ENCODE measurements at regions of chr7 and their contacts with region 1.

Region 1: GRCh38 chr7:129224251-129225205 is at the start of gene AHCYL2:
- DNase-seq: peak; percentile 88 to 98 (median 95)
- ATAC-seq: peak; percentile 96
- H3K4me3 ChIP-seq: peak within 1 kb of the TSS; percentile 96
- H3K4me3 Mint-ChIP-seq: peak within 1 kb of the TSS; percentile 88 to 99 (median 96)
- H3K27ac ChIP-seq: peak within 1 kb of the TSS; percentile 85
- H3K27ac Mint-ChIP-seq: peak within 1 kb of the TSS; percentile 87 to 98 (median 95)
- H3K4me1 ChIP-seq: peaks cover 13 to 16% of the 10 kb centered on the region in 2 donors
- H3K4me1 Mint-ChIP-seq: peaks cover 27 to 63% (median 48%) of the 10 kb centered on the region in 7 donors
- H3K27me3 ChIP-seq: no peaks in the 10 kb centered on the region
- H3K27me3 Mint-ChIP-seq: no peaks in the 10 kb centered on the region
- total RNA-seq, gene AHCYL2: 14.4 to 22.2 (median 20.4) TPM

Region 2: DNA sequence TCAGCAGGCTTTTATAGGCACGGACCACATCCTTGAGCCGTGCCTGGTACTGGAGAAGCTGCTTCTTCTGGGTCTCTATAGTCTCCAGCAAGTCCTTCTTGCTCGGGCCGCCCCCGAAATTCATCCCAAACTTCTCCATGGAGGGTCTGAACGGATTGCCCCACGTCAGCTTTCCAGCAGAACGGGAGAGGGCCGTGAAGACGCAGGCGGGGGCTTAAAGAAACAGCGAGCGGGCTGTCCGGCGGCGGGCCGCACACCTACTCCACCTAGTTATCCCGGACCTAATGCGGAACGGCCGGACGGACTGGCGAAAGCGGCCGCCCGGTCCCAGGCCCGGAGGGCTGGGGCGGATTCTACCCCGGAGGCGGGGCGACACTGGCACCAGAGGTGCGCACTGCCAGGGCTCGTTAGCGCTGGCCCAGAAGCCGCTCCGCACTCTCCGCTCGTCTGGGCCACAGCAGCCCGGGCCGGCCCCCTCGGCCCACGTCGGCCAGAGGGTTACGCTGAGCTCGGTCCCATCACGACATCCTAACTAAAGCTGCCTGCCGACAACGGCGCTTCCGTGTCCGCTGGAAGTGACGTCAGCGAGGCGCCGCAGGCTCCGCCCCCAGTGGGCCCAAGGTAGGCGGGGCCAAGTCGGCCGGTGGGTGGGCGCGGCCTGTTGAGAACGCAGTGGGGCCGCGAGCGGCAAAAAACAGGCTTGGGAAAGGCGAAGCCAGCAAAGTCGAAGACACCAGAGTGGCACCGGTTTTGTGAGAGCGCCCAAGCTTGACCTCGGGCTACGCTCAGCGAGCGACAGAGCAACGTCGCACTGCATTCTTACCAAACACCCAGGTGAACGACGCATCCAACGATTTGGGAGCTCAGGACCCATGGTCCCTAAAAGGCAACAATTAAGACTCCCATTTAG is 1639.2 kb before region 1 on chr7 and contains the start of gene GCC1:
- CTCF ChIA-PET with region 1: no interaction called
- POLR2A ChIA-PET with region 1: no interaction called
- intact Hi-C with region 1: loop called in 1 of 2 experiments (anchors 5 kb)
- DNase-seq: peak; percentile 87 to 98 (median 93)
- ATAC-seq: peak; percentile 87
- H3K4me3 ChIP-seq: peak within 1 kb of the TSS; percentile 87
- H3K4me3 Mint-ChIP-seq: peak within 1 kb of the TSS; percentile 86 to 98 (median 92)
- H3K27ac ChIP-seq: peak within 1 kb of the TSS; percentile 88
- H3K27ac Mint-ChIP-seq: peak within 1 kb of the TSS; percentile 77 to 97 (median 94)
- H3K4me1 ChIP-seq: peaks cover 47 to 55% of the 10 kb centered on the region in 2 donors
- H3K4me1 Mint-ChIP-seq: peaks cover 55 to 88% (median 78%) of the 10 kb centered on the region in 7 donors
- H3K27me3 ChIP-seq: no peaks in the 10 kb centered on the region
- H3K27me3 Mint-ChIP-seq: no peaks in the 10 kb centered on the region
- total RNA-seq, gene GCC1: 19.6 to 31.3 (median 23.7) TPM

Region 3: GRCh38 chr7:128455551-128456254 is 768.8 kb before region 1 on chr7 and contains the start of gene HILPDA:
- CTCF ChIA-PET with region 1: no interaction called
- POLR2A ChIA-PET with region 1: no interaction called
- intact Hi-C with region 1: loop called in 1 of 2 experiments (anchors 1 kb)
- DNase-seq: peak; percentile 90 to 98 (median 93)
- ATAC-seq: peak; percentile 95
- H3K4me3 ChIP-seq: peak within 1 kb of the TSS; percentile 85
- H3K4me3 Mint-ChIP-seq: peak within 1 kb of the TSS; percentile 81 to 96 (median 92)
- H3K27ac ChIP-seq: peak within 1 kb of the TSS; percentile 83
- H3K27ac Mint-ChIP-seq: peak within 1 kb of the TSS; percentile 72 to 98 (median 89)
- H3K4me1 ChIP-seq: peaks cover 12 to 22% of the 10 kb centered on the region in 2 donors
- H3K4me1 Mint-ChIP-seq: peaks cover 13 to 65% (median 22%) of the 10 kb centered on the region in 7 donors
- H3K27me3 ChIP-seq: no peaks in the 10 kb centered on the region
- H3K27me3 Mint-ChIP-seq: peaks cover 0 to 8% (median 0%) of the 10 kb centered on the region in 5 donors
- total RNA-seq, gene HILPDA: 2.4 to 39.5 (median 4.4) TPM

Region 4: GRCh38 chr7:129144095-129144833 is 80.3 kb before region 1 on chr7 and contains the start of gene TSPAN33:
- CTCF ChIA-PET with region 1: no interaction called
- POLR2A ChIA-PET with region 1: no interaction called
- intact Hi-C with region 1: loop called in 1 of 2 experiments (anchors 1 kb)
- DNase-seq: peak; percentile 43 to 79 (median 53)
- ATAC-seq: peak; percentile 93
- H3K4me3 ChIP-seq: peak within 1 kb of the TSS; percentile 93
- H3K4me3 Mint-ChIP-seq: peak within 1 kb of the TSS; percentile 90 to 97 (median 94)
- H3K27ac ChIP-seq: peak within 1 kb of the TSS; percentile 58
- H3K27ac Mint-ChIP-seq: peak within 1 kb of the TSS in 8 of 9 donors; percentile 7 to 84 (median 73)
- H3K4me1 ChIP-seq: peaks cover 4 to 10% of the 10 kb centered on the region in 2 donors
- H3K4me1 Mint-ChIP-seq: peaks cover 12 to 36% (median 28%) of the 10 kb centered on the region in 7 donors
- H3K27me3 ChIP-seq: peaks cover 0 to 5% of the 10 kb centered on the region in 2 donors
- H3K27me3 Mint-ChIP-seq: peaks cover 0 to 66% (median 5%) of the 10 kb centered on the region in 5 donors
- total RNA-seq, gene TSPAN33: 1.8 to 14.8 (median 3.6) TPM

Region 5: DNA sequence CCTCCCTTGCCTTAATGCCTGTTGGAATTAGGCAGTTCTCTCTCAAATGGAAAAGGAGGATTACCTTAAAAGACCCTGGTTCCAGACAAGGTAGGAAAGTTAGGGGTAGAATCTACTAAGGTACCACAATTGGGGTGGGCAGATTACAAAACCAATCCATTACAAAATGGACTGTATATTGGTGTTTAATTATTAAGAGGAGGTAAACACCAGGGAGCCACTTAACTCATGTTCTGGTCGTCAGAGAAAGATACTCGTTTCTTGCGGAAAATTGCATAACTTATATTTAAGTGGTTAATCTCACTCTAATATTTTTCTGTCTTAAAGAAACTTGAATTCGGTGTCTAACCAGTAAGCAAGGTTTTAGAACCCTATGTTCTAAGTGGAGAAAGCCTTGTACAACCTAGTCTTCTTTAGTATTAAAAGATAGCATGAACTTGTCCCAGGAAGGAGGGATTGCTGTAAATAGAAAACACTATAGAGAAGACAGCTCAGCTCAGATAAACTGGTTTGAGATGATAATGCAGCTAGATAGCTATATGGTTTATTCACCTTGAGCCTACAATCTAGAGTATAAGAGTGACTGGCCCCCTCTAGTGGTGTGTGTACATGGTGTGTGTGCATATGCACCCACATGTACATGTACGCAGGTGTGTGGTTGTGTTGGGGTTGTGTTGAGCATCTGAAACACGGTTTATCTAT is 151.7 kb after region 1 on chr7:
- CTCF ChIA-PET with region 1: interaction called, 11 read pairs
- POLR2A ChIA-PET with region 1: no interaction called
- intact Hi-C with region 1: loop called in 1 of 2 experiments (anchors 10 kb)
- DNase-seq: peak in 8 of 9 donors; percentile 8 to 39 (median 26)
- ATAC-seq: peak; percentile 73
- H3K4me3 ChIP-seq: no peak overlapping the region
- H3K4me3 Mint-ChIP-seq: no peak overlapping the region
- H3K27ac ChIP-seq: no peak overlapping the region
- H3K27ac Mint-ChIP-seq: peak overlapping the region in 1 of 9 donors; percentile 57
- H3K4me1 ChIP-seq: peaks cover 0 to 3% of the 10 kb centered on the region in 2 donors
- H3K4me1 Mint-ChIP-seq: peaks cover 0 to 39% (median 0%) of the 10 kb centered on the region in 7 donors
- H3K27me3 ChIP-seq: no peaks in the 10 kb centered on the region
- H3K27me3 Mint-ChIP-seq: no peaks in the 10 kb centered on the region

Region 6: GRCh38 chr7:129635300-129636029 is 410.9 kb after region 1 on chr7:
- CTCF ChIA-PET with region 1: no interaction called
- POLR2A ChIA-PET with region 1: interaction called, 3 read pairs
- intact Hi-C with region 1: loop called in 1 of 2 experiments (anchors 5 kb)
- DNase-seq: peak; percentile 20 to 73 (median 64)
- ATAC-seq: peak; percentile 97
- H3K4me3 ChIP-seq: no peak overlapping the region
- H3K4me3 Mint-ChIP-seq: peak overlapping the region in 1 of 10 donors; percentile 29
- H3K27ac ChIP-seq: peak overlapping the region; percentile 18
- H3K27ac Mint-ChIP-seq: peak overlapping the region in 8 of 9 donors; percentile 2 to 85 (median 42)
- H3K4me1 ChIP-seq: peaks cover 0 to 3% of the 10 kb centered on the region in 2 donors
- H3K4me1 Mint-ChIP-seq: peaks cover 16 to 73% (median 51%) of the 10 kb centered on the region in 7 donors
- H3K27me3 ChIP-seq: no peaks in the 10 kb centered on the region
- H3K27me3 Mint-ChIP-seq: no peaks in the 10 kb centered on the region

Region 7: DNA sequence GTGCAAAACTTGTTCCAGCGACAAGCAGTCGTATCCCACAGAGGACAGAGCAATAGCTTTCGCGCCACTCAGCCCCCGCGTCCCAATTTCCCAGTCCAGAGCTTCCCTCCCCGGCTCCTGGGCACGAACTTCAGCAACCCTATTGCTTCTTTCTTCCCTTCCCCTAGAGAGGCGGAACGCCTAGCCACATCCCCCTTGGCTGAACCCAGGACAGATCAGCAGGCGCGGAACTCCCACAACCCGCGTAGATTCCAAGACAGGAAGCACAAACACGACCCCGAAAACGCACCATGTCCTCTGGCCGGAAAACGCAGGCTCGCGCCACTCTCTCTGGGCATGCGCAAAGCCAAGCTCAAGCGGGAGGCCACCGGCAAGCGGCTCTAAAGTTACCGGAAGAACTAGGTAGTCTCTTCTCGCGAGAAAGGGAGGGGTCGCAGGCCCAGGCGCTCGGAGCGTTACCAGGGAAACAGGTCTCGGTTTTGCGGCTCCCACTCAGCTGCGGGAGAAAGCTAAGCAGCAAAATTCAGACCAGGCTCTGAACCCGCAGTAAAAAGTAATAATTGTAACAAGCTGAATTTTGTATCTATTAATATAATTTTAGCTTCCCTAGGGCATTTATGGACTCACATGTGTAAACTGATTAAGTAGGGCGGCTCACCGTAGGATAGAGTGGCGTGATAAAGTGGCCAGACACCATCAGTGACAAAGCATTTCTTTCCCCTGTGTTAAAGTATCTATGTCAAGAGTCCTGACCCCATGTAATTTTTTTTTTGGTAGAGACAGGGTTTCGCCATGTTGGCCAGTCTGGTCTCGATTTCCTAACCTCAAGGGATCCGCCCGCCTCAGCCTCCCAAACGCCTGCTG is 980.8 kb after region 1 on chr7 and contains the start of gene TMEM209:
- CTCF ChIA-PET with region 1: no interaction called
- POLR2A ChIA-PET with region 1: no interaction called
- intact Hi-C with region 1: loop called in 1 of 2 experiments (anchors 10 kb)
- DNase-seq: peak; percentile 80 to 96 (median 93)
- ATAC-seq: peak; percentile 98
- H3K4me3 ChIP-seq: peak within 1 kb of the TSS; percentile 89
- H3K4me3 Mint-ChIP-seq: peak within 1 kb of the TSS; percentile 98 to 100 (median 100)
- H3K27ac ChIP-seq: peak within 1 kb of the TSS; percentile 83
- H3K27ac Mint-ChIP-seq: peak within 1 kb of the TSS; percentile 97 to 100 (median 99)
- H3K4me1 ChIP-seq: peaks cover 11 to 14% of the 10 kb centered on the region in 2 donors
- H3K4me1 Mint-ChIP-seq: peaks cover 13 to 43% (median 37%) of the 10 kb centered on the region in 7 donors
- H3K27me3 ChIP-seq: no peaks in the 10 kb centered on the region
- H3K27me3 Mint-ChIP-seq: peaks cover 0 to 9% (median 0%) of the 10 kb centered on the region in 5 donors
- total RNA-seq, gene TMEM209: 18.8 to 37.3 (median 35.1) TPM

Region 8: DNA sequence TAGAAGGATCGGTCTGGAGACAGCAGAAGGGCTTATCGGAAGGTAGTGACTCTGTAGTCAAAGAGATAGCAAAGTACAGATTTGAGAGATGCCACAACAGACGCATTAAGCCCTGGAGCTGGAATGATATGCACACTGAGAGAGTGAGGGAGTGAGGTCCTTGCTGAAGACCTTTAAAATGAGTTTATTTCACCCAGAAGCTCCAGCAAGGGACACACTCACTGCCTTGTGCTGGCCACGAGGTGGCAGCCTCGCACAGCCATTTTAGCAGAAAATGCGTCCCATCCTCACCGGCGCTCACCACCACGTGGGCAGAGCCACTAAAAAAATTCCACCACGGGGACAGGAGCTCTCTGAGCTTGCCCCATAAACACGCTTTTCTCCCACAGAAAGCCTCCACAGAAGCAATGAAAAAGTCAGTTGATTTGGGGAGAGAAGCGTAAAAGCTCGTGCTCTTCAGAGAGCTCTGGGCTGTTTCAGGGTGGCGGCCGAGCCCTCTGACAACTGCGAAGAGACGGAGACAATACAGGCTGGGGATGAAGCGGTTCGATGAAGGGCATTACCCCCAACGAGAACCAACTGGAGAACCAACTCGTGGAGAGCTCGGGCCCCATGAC is 1672.5 kb after region 1 on chr7:
- CTCF ChIA-PET with region 1: no interaction called
- POLR2A ChIA-PET with region 1: no interaction called
- intact Hi-C with region 1: no loop called
- DNase-seq: peak; percentile 60 to 76 (median 69)
- ATAC-seq: peak; percentile 84
- H3K4me3 ChIP-seq: no peak overlapping the region
- H3K4me3 Mint-ChIP-seq: peak overlapping the region in 7 of 10 donors; percentile 16 to 67 (median 37)
- H3K27ac ChIP-seq: no peak overlapping the region
- H3K27ac Mint-ChIP-seq: peak overlapping the region; percentile 61 to 92 (median 84)
- H3K4me1 ChIP-seq: peaks cover 16 to 35% of the 10 kb centered on the region in 2 donors
- H3K4me1 Mint-ChIP-seq: peaks cover 49 to 86% (median 83%) of the 10 kb centered on the region in 7 donors
- H3K27me3 ChIP-seq: no peaks in the 10 kb centered on the region
- H3K27me3 Mint-ChIP-seq: no peaks in the 10 kb centered on the region